ENCODE measurements at regions of chr5 and their contacts with region 1.

Region 1: GRCh38 chr5:119411935-119412602 is 40.2 kb upstream of the HSD17B4 start:
- DNase-seq: peak; percentile 67 to 78
- ATAC-seq: peak; percentile 97 to 98
- H3K4me3 ChIP-seq: peak overlapping the region; percentile 49
- H3K27ac ChIP-seq: peak overlapping the region; percentile 73 to 85
- H3K4me1 ChIP-seq: peaks cover 14% of the 10 kb centered on the region; the same call in 2 of the 3 replicates
- CTCF ChIP-seq: peak; percentile 99
- EP300 ChIP-seq: no peak
- POLR2A ChIP-seq: no peak
- RAD21 ChIP-seq: peak; percentile 94 to 97

Region 2: DNA sequence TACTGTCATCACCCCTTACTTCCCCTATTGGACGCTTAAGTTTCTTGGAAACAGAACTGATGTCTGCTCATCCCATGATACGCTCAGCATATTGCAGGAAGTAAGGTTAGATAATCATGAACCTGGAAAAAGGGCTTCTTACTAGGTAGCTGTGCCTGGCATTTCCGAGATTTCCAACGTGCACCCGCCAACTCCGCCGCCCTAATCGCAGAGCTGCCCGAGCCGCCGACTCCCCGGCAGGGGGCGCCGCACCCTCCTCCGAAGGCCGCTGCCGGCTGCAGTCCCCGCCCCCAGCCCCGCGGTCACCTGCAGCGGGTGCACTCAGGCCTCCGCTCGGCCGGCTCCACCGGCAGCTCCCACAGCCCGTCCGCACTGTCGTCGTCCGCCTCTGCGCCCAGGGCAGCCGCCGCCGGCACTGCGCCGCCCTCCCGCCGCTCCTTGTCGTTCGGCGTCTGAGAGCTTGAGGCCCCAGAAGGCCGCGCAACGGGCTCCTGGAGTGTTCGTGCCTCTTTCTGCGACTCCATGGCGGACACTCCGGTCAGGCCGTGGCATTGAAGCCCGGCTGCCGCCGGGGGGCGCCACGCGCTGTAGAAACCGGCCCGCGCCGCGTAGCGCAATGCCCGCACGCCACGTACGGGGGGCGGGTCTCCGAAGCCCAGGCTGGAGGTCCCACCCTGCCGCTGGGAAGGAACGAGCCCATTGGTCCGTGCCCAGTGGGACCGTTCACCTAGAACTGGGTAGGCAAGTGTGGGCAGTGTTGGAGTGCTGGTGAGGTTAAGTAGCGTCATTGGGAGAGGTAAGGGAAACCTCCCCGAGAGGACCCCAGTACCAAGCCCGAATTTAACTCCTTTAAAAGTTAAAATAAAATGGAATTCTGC is 423.8 kb before region 1 on chr5 and contains the start of gene DTWD2:
- CTCF ChIA-PET with region 1: interaction called, 173 read pairs
- POLR2A ChIA-PET with region 1: interaction called, 22 read pairs
- DNase-seq: peak; percentile 94 to 95
- ATAC-seq: peak; percentile 99
- H3K4me3 ChIP-seq: peak within 1 kb of the TSS; percentile 54
- H3K27ac ChIP-seq: peak within 1 kb of the TSS; percentile 94 to 98
- H3K4me1 ChIP-seq: peaks cover 16% of the 10 kb centered on the region; the same call in 2 of the 3 replicates
- CTCF ChIP-seq: peak; percentile 98
- EP300 ChIP-seq: no peak
- POLR2A ChIP-seq: peak; percentile 84
- RAD21 ChIP-seq: peak; percentile 78 to 95
- polyA plus RNA-seq, gene DTWD2: 4.1 and 4.8 TPM in 2 replicates

Region 3: DNA sequence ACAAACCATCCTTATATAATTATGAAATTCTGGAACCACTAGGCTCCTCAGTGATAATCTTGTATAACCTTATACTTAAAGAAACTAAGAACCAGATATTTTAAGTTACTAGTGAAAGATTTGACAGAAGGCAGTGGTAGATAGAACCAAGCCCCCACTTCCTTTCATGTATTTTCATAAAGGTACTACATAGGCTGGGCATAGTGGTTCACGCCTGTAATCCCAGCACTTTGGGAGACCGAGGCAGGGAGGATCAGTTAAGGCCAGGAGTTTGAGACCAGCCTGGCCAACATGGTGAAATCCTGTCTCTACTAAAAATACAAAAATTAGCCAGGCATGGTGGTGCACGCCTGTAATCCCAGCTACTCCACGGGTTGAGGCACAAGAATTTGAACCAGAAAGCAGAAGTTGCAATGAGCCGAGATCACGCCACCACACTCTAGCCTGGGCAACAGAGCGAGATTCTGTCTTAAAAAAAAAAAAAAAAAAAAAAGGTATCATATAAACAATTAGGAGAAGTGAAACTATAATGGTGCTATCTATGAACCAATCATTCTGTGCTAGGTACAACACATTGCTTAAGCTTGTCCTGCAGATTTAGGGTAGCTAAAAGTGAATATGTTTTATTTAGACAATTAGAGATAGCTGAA is 395.8 kb before region 1 on chr5:
- CTCF ChIA-PET with region 1: interaction called, 40 read pairs
- POLR2A ChIA-PET with region 1: no interaction called
- DNase-seq: no peak
- ATAC-seq: no peak
- H3K4me3 ChIP-seq: no peak overlapping the region
- H3K27ac ChIP-seq: no peak overlapping the region
- H3K4me1 ChIP-seq: peaks cover 14% of the 10 kb centered on the region
- CTCF ChIP-seq: no peak
- EP300 ChIP-seq: no peak
- POLR2A ChIP-seq: no peak
- RAD21 ChIP-seq: no peak

Region 4: GRCh38 chr5:119070828-119071572 is 341.1 kb before region 1 on chr5 and contains the start of gene DMXL1:
- CTCF ChIA-PET with region 1: interaction called, 10 read pairs
- POLR2A ChIA-PET with region 1: interaction called, 11 read pairs
- DNase-seq: peak; percentile 81 to 99
- ATAC-seq: peak; percentile 91 to 95
- H3K4me3 ChIP-seq: peak within 1 kb of the TSS; percentile 74
- H3K27ac ChIP-seq: peak within 1 kb of the TSS; percentile 83 to 92
- H3K4me1 ChIP-seq: peaks cover 19% of the 10 kb centered on the region
- CTCF ChIP-seq: no peak
- EP300 ChIP-seq: no peak
- POLR2A ChIP-seq: peak; percentile 57
- RAD21 ChIP-seq: no peak
- polyA plus RNA-seq, gene DMXL1: 23.6 and 28.8 TPM in 2 replicates

Region 5: DNA sequence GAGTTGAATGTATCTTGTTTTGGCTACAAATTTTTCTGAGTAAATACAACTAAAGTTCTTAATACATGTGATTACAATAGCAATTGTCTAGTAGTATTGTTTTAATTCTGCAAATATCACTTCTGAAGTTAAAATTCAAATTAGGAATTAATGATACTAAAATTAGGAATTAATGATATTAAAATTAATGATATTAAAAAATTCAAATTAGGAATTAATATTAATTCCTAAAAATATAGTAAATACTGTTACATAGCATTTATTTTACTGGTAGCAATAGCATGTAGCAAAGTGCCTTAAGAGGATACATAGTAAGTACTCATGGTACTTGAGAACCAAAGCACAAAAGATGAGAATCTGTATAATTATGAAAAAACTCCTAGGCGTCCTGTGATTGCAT is 205.0 kb before region 1 on chr5:
- CTCF ChIA-PET with region 1: no interaction called
- POLR2A ChIA-PET with region 1: no interaction called
- DNase-seq: no peak
- ATAC-seq: no peak
- H3K4me3 ChIP-seq: no peak overlapping the region
- H3K27ac ChIP-seq: no peak overlapping the region
- H3K4me1 ChIP-seq: no peaks in the 10 kb centered on the region
- CTCF ChIP-seq: no peak
- EP300 ChIP-seq: no peak
- POLR2A ChIP-seq: no peak
- RAD21 ChIP-seq: no peak

Region 6: GRCh38 chr5:119315516-119315949 is 96.5 kb before region 1 on chr5:
- CTCF ChIA-PET with region 1: interaction called, 28 read pairs
- POLR2A ChIA-PET with region 1: no interaction called
- DNase-seq: peak; percentile 67 to 70
- ATAC-seq: peak; percentile 91 to 94
- H3K4me3 ChIP-seq: no peak overlapping the region
- H3K27ac ChIP-seq: peak overlapping the region; percentile 32 to 77; a peak in 4 of 6 replicates
- H3K4me1 ChIP-seq: peaks cover 32% of the 10 kb centered on the region
- CTCF ChIP-seq: peak; percentile 28; the same call in 2 of the 3 replicates
- EP300 ChIP-seq: no peak
- POLR2A ChIP-seq: no peak
- RAD21 ChIP-seq: peak; percentile 46 to 50; a peak in 2 of 5 replicates

Region 7: DNA sequence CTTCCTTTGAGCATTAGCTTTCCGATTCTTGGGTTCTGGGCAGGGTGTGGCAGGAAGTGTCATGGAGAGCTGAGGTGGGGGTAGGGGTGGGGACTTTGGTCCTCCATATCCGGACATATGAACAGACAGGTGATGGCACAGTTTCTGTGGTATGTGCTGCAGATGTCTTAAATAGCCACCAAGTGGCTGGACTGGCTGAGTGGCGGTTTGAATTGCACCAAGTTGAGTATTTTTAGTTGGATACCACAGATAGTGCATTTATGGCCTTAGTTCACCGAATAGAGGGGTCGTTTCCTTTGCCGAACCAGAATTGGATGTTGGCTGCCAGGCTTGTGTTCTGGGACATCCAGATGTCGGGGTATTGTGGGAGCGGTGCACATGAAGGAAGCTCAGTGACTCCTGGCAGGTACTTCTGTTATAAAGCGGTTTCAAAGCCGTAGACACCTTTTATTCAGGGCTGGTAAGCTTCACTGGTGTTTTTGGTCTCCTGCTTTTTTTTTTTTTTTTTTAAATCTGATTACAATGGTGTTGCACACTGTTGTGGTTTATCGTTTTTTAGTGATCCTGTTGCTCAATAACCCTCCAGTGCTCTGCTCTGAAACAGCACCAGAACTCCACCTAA is 71.4 kb before region 1 on chr5:
- CTCF ChIA-PET with region 1: interaction called, 44 read pairs
- POLR2A ChIA-PET with region 1: no interaction called
- DNase-seq: no peak
- ATAC-seq: no peak
- H3K4me3 ChIP-seq: no peak overlapping the region
- H3K27ac ChIP-seq: no peak overlapping the region
- H3K4me1 ChIP-seq: peaks cover 11% of the 10 kb centered on the region; the same call in 1 of the 3 replicates
- CTCF ChIP-seq: no peak
- EP300 ChIP-seq: no peak
- POLR2A ChIP-seq: no peak
- RAD21 ChIP-seq: no peak

Region 8: DNA sequence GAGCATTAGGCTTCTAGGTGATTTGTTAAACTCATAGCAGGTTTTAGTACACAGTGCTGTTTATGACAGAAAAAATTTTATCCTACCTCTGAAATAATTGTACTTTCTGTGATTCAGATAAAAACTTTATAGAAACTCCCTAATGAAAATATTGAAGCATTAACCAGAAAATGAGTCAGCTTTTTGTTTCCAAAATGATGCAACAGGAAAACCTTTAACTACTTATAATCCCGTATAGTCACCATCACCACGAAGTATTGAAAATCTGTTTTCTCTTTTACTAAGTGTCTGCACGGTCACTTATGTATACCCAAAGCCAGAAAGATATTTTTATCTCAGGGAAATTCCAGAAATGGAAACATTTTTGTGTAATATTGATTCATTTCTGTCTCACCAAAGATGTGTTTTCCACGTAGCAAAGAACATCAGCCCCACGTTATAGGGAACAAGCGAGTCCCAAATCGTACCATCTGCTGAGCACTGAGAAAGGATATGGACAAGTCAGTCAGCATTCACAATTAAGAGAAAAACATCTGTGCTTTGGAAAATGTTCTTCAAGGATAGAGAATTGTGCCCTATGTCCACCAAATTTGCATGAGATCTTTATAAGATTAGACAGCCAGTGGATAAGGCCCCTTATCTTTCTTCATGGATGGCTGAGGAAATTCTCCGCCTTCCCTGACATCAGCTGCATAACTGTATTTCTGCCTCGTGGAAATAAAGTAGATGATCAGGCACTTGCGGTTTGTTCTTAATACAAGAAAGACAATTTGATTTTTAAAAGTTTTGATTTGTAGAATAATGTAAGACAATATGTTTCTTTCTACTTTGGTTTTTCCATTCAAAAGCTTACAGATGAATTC is 14.3 kb before region 1 on chr5:
- CTCF ChIA-PET with region 1: interaction called, 65 read pairs
- POLR2A ChIA-PET with region 1: no interaction called
- DNase-seq: peak in 1 of 2 experiments; percentile 8
- ATAC-seq: no peak; a peak in 1 of 6 replicates
- H3K4me3 ChIP-seq: no peak overlapping the region; the same call in 2 of the 3 replicates
- H3K27ac ChIP-seq: peak overlapping the region; percentile 54 to 74
- H3K4me1 ChIP-seq: peaks cover 38% of the 10 kb centered on the region
- CTCF ChIP-seq: no peak
- EP300 ChIP-seq: no peak
- POLR2A ChIP-seq: no peak
- RAD21 ChIP-seq: no peak

Region 9: GRCh38 chr5:119785057-119785456 is 373.0 kb after region 1 on chr5:
- CTCF ChIA-PET with region 1: no interaction called
- POLR2A ChIA-PET with region 1: no interaction called
- DNase-seq: no peak
- ATAC-seq: no peak
- H3K4me3 ChIP-seq: no peak overlapping the region
- H3K27ac ChIP-seq: no peak overlapping the region
- H3K4me1 ChIP-seq: no peaks in the 10 kb centered on the region
- CTCF ChIP-seq: no peak
- EP300 ChIP-seq: no peak
- POLR2A ChIP-seq: no peak
- RAD21 ChIP-seq: no peak

Measured in A549 (cell line).